ENCODE measurements at regions of chr17 and their contacts with region 1.

Region 1: DNA sequence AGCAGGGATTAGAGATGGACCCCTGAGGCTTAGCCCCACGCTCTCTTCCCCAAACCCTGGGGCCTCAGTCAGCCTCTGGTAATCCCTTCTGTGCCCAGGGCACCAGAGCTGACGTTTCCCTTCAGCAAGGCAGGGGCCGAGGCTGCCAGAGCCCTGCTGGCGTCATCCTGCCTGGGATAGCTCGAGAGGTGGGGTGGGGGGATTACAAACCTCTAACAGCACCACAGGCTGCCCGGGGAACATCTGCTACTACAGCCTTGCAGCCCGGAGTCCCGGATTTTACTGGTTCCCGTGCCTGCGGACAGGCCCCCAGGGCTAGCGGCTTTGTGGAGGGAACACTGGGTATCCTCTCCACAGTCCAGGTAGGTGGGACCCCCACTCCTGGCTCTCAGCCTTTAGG is at the start of gene AANAT:
- DNase-seq: no peak
- H3K4me3 ChIP-seq: no peak within 1 kb of the TSS
- H3K27ac ChIP-seq: no peak within 1 kb of the TSS
- H3K4me1 ChIP-seq: peaks cover 0 to 6% (median 0%) of the 10 kb centered on the region in 4 donors
- H3K27me3 ChIP-seq: peaks cover 0 to 11% of the 10 kb centered on the region in 2 donors
- CTCF ChIP-seq: no peak

Region 2: GRCh38 chr17:76506408-76507349 is 39.3 kb after region 1 on chr17:
- intact Hi-C with region 1: loop called (anchors 1 kb)
- DNase-seq: peak; percentile 82 to 89
- H3K4me3 ChIP-seq: no peak overlapping the region
- H3K27ac ChIP-seq: no peak overlapping the region
- H3K4me1 ChIP-seq: peaks cover 0 to 15% (median 10%) of the 10 kb centered on the region in 4 donors
- H3K27me3 ChIP-seq: peaks cover 0 to 27% of the 10 kb centered on the region in 2 donors
- CTCF ChIP-seq: peak; percentile 96 to 98

Measured in tibial artery (tissue), 4 donors.